GM12878 (cell line): ENCODE measurements at regions of chr12 and their contacts with region 1.

Region 1: DNA sequence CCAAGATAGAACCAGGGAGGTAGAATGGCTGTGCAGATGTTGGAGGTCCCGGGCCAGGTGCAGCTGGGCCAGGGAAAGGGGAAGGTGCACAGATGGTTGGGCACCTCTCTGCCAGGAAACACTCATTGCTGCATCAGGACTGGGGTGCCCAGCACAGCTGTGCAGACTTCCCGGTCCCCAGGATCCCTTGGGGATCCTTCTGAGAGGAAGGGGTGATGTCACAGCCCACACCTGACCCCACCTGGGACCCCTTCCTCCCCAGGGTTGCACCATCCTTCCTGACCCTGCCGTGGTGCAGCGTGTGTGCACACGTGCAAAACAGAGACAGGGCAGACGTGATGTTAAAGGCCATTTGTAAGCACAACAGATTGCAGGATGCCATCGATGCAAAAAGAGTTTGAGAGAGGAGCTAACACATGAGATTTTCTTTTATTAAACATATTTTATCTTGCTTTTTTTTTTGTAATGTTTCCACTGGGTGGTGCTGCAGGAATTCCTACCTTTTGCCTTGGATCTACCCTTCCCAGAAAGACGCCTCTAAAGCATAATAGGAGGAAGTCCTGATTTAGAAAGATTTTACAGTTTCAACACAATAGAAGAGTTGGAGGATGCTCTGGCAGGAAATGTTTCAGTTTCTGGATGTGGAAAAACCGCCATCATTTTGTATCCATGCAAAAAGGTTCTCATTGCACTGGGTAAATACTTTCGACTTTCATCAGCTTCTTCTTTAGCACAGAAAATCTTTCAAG is 14.8 kb downstream of the ELK3 start:
- DNase-seq: no peak
- ATAC-seq: peak; percentile 32
- H3K4me3 ChIP-seq: no peak overlapping the region
- H3K27ac ChIP-seq: no peak overlapping the region
- H3K4me1 ChIP-seq: peaks cover 35% of the 10 kb centered on the region
- H3K27me3 ChIP-seq: no peaks in the 10 kb centered on the region
- CTCF ChIP-seq: no peak
- EP300 ChIP-seq: no peak
- POLR2A ChIP-seq: no peak
- RAD21 ChIP-seq: no peak

Region 2: GRCh38 chr12:96061864-96062453 is 147.0 kb before region 1 on chr12:
- CTCF ChIA-PET with region 1: interaction called, 167 read pairs
- POLR2A ChIA-PET with region 1: no interaction called
- RAD21 ChIA-PET with region 1: interaction called, 29 read pairs
- SMC1A ChIA-PET with region 1: interaction called, 90 read pairs
- in situ Hi-C with region 1: loop called (anchors 5 kb)
- intact Hi-C with region 1: no loop called
- DNase-seq: peak; percentile 79
- ATAC-seq: peak; percentile 96
- H3K4me3 ChIP-seq: no peak overlapping the region
- H3K27ac ChIP-seq: no peak overlapping the region
- H3K4me1 ChIP-seq: peaks cover 4% of the 10 kb centered on the region; the same call in 1 of the 2 replicates
- H3K27me3 ChIP-seq: no peaks in the 10 kb centered on the region
- CTCF ChIP-seq: peak; percentile 67 to 88 (median 81); a peak in 5 of 6 replicates
- EP300 ChIP-seq: no peak
- POLR2A ChIP-seq: no peak
- RAD21 ChIP-seq: peak; percentile 91

Region 3: GRCh38 chr12:96070670-96071279 is 138.2 kb before region 1 on chr12:
- CTCF ChIA-PET with region 1: interaction called, 167 read pairs
- POLR2A ChIA-PET with region 1: interaction called, 5 read pairs
- RAD21 ChIA-PET with region 1: interaction called, 19 read pairs
- SMC1A ChIA-PET with region 1: interaction called, 60 read pairs
- in situ Hi-C with region 1: no loop called
- intact Hi-C with region 1: no loop called
- DNase-seq: peak; percentile 17
- ATAC-seq: peak; percentile 92
- H3K4me3 ChIP-seq: no peak overlapping the region
- H3K27ac ChIP-seq: no peak overlapping the region
- H3K4me1 ChIP-seq: peaks cover 6% of the 10 kb centered on the region
- H3K27me3 ChIP-seq: peaks cover 0 to 2% of the 10 kb centered on the region in 2 experiments; a peak in 2 of 4 replicates
- CTCF ChIP-seq: peak; percentile 20 to 37 (median 34); a peak in 3 of 6 replicates
- EP300 ChIP-seq: no peak
- POLR2A ChIP-seq: no peak
- RAD21 ChIP-seq: peak; percentile 25; the same call in 1 of the 2 replicates

Region 4: GRCh38 chr12:96194971-96195844 is 13.8 kb before region 1 on chr12:
- CTCF ChIA-PET with region 1: interaction called, 7 read pairs
- POLR2A ChIA-PET with region 1: interaction called, 3 read pairs
- RAD21 ChIA-PET with region 1: interaction called, 25 read pairs
- SMC1A ChIA-PET with region 1: interaction called, 25 read pairs
- in situ Hi-C with region 1: no loop called
- intact Hi-C with region 1: loop called (anchors 2 kb)
- DNase-seq: peak; percentile 80
- ATAC-seq: peak; percentile 80
- H3K4me3 ChIP-seq: peak overlapping the region; percentile 98
- H3K27ac ChIP-seq: peak overlapping the region; percentile 72
- H3K4me1 ChIP-seq: peaks cover 28% of the 10 kb centered on the region
- H3K27me3 ChIP-seq: peaks cover under 1 to 2% of the 10 kb centered on the region in 2 experiments; a peak in 3 of 4 replicates
- CTCF ChIP-seq: no peak
- EP300 ChIP-seq: peak; percentile 75 to 79; a peak in 3 of 4 replicates
- POLR2A ChIP-seq: peak; percentile 33; the same call in 1 of the 2 replicates
- RAD21 ChIP-seq: 0 out of 2 replicates have a peak, but pooled peaks have one; percentile 2